Mammary epithelial cell (primary cell): ENCODE measurements at regions of chr19 and their contacts with region 1.

Region 1: DNA sequence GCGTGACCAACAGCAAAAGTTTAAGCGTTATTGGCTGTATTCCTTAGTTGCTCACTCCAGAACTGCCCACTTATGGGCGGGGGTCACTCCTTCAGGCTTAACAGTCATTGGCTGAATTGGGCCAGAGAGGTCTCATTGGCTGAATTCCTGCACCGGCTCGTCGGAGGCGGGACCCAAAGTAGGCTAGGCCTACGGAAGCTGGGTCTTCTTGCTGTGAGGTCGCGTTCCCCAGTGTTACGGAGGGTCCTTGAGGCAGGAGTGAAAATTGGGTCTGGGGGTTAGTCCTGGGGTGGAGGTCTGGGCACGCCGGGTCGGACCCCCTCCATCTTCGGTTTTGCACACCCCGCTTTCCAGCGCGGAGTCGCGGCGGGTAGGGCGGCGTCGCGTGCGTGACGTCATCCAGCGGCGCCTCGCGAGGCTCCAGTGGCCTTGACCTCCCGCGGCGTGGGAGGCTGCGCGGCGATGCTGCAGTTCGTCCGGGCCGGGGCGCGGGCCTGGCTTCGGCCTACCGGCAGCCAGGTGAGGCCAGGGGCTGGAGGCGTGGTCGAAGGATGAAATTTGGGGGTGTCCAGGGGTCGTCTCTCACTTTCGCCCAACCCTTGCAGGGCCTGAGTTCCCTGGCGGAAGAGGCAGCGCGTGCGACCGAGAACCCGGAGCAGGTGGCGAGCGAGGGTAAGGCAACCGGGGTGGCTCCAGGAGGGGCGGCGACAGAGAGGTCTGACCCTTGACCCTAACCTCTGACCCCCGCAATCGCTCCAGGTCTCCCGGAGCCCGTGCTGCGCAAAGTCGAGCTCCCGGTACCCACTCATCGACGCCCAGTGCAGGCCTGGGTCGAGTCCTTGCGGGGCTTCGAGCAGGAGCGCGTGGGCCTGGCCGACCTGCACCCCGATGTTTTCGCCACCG is at the start of gene MRPL4:
- DNase-seq: peak; percentile 99
- H3K4me3 ChIP-seq: peak within 1 kb of the TSS; percentile 76 to 97 (median 91)
- H3K27ac ChIP-seq: peak within 1 kb of the TSS; percentile 63
- H3K4me1 ChIP-seq: peaks cover 13% of the 10 kb centered on the region
- H3K27me3 ChIP-seq: no peaks in the 10 kb centered on the region
- CTCF ChIP-seq: no peak
- total RNA-seq, gene MRPL4: 55.8 to 89.1 TPM

Region 2: DNA sequence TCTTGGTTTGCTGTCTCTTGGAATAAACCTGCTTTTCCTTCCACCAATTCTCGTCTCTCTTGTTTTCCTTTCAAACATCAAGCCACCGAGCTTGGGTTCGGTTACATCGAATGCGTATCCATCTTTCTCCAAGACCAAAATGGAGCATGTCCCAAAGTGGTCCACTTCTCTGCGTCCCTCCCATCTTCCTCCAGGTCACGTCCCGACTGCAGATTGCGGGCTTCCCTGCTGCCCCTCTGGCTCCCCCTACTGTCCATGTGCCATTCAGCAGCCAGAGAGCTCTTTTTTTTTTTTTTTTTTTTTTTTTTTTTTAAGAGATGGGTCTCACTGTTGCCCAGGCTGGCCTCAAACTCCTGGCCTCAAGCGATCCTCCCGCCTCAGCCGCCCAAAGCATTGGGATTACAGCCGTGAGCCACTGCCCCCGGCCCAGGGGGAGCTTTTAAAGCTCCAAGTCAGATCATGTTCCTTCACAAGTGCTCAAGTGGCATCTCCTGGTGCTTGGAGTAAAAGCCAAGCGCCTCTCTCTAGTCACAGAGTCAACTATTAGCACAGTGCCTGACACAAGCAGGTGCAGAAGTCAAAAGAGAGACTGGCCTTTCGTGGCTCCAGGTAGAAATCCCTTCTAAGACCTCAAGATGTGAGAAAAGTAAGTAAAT is 251.7 kb before region 1 on chr19:
- CTCF ChIA-PET with region 1: no interaction called
- dilution Hi-C with region 1: no loop called
- in situ Hi-C with region 1: no loop called
- intact Hi-C with region 1: loop called (anchors 2 kb)
- DNase-seq: peak; percentile 34
- H3K4me3 ChIP-seq: no peak overlapping the region
- H3K27ac ChIP-seq: no peak overlapping the region
- H3K4me1 ChIP-seq: no peaks in the 10 kb centered on the region
- H3K27me3 ChIP-seq: no peaks in the 10 kb centered on the region
- CTCF ChIP-seq: peak; percentile 79 to 88

Region 3: GRCh38 chr19:10095948-10096621 is 156.0 kb before region 1 on chr19:
- CTCF ChIA-PET with region 1: no interaction called
- dilution Hi-C with region 1: no loop called
- in situ Hi-C with region 1: no loop called
- intact Hi-C with region 1: loop called (anchors 1 kb)
- DNase-seq: peak; percentile 87
- H3K4me3 ChIP-seq: peak overlapping the region; percentile 43 to 55 (median 53)
- H3K27ac ChIP-seq: peak overlapping the region; percentile 3
- H3K4me1 ChIP-seq: peaks cover 13% of the 10 kb centered on the region
- H3K27me3 ChIP-seq: no peaks in the 10 kb centered on the region
- CTCF ChIP-seq: no peak

Region 4: GRCh38 chr19:10120538-10121189 is 131.4 kb before region 1 on chr19:
- CTCF ChIA-PET with region 1: interaction called, 3 read pairs
- dilution Hi-C with region 1: no loop called
- in situ Hi-C with region 1: loop called in 1 of 2 experiments (anchors 10 kb)
- intact Hi-C with region 1: loop called (anchors 1 kb)
- DNase-seq: peak; percentile 88
- H3K4me3 ChIP-seq: no peak overlapping the region
- H3K27ac ChIP-seq: no peak overlapping the region
- H3K4me1 ChIP-seq: peaks cover 5% of the 10 kb centered on the region
- H3K27me3 ChIP-seq: no peaks in the 10 kb centered on the region
- CTCF ChIP-seq: no peak

Region 5: GRCh38 chr19:10194500-10195289 is 57.3 kb before region 1 on chr19 and contains the start of gene DNMT1:
- CTCF ChIA-PET with region 1: no interaction called
- dilution Hi-C with region 1: no loop called
- in situ Hi-C with region 1: no loop called
- intact Hi-C with region 1: loop called (anchors 1 kb)
- DNase-seq: peak; percentile 95
- H3K4me3 ChIP-seq: peak within 1 kb of the TSS; percentile 86 to 96 (median 94)
- H3K27ac ChIP-seq: peak within 1 kb of the TSS; percentile 70
- H3K4me1 ChIP-seq: peaks cover 7% of the 10 kb centered on the region
- H3K27me3 ChIP-seq: no peaks in the 10 kb centered on the region
- CTCF ChIP-seq: no peak
- total RNA-seq, gene DNMT1: 23.0 to 139 TPM